CD14-positive monocyte (primary cell): ENCODE measurements at regions of chr21 and their contacts with region 1.

Region 1: DNA sequence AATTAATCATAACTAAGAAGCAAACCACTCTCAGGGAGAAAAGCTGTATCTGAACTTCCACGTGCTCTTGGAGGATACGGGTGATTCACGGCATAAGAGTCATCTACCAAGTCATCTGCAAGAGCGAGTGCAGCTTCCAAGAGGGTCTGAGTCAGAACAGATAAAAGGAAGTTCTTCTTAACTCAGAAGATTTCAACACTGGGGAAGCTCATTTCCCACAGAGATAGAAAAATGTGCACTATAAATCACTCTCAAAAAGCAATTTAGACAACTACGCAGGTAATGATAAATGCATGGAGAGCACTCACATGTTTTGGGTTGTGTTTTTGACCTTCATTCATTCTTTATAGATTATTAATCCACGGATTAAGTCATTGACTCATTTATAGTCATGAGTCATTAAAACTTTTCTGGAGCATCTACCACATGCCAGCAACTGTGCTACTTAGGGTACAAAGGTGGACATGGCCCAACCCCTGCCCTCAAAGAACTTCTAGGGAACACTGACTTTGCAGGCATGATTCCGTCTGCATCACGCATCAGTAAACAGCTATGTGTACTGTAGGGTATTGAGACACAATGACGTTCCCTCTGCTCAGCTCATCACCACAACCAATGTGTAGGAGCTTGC is 20.8 kb downstream of the KCNJ15 start:
- DNase-seq: peak; percentile 96 to 99 (median 98)
- H3K4me3 ChIP-seq: no peak overlapping the region
- H3K4me3 Mint-ChIP-seq: peak overlapping the region in 1 of 2 donors; percentile 30
- H3K27ac ChIP-seq: peak overlapping the region; percentile 88 to 99
- H3K27ac Mint-ChIP-seq: peak overlapping the region; percentile 95 to 99 (median 99)
- H3K4me1 ChIP-seq: peaks cover 88 to 94% of the 10 kb centered on the region in 2 donors
- H3K4me1 Mint-ChIP-seq: peaks cover 84% of the 10 kb centered on the region
- H3K27me3 ChIP-seq: no peaks in the 10 kb centered on the region
- H3K27me3 Mint-ChIP-seq: peaks cover 0 to 2% (median 0%) of the 10 kb centered on the region in 3 donors
- CTCF ChIP-seq: no peak

Region 2: DNA sequence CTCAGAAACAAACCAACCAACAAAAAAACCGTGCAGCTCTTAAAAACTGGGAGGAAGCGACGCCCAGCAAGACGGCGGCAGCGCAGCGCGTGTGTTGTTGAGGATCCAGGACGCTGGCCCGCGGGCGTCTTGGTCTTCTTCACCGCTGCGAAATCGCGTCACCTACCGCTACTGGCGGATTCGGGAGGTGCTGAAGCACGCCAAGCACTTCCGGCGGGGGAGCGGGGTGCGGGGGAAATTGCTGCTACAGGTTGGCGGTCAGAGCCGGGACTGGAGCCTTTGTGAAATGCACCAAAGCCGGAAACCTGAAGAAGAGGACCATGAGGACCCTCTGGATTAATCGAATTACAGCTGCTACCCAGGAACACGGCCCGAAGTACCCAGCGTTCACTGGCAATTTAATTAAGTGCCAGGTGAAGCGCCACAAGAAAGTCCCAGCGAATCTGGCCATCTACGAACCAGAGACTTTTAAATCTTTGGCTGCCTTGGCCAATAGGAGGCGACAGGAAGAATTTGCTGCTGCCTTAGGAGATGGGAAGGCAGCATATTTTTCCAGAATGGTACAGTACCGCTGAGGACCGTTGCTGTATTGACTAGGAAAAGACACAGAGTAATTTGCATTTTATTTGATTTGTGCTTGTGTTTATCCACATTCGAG is 1283.0 kb before region 1 on chr21:
- intact Hi-C with region 1: no loop called
- DNase-seq: no peak
- H3K4me3 ChIP-seq: no peak overlapping the region
- H3K4me3 Mint-ChIP-seq: peak overlapping the region; percentile 47 to 80
- H3K27ac ChIP-seq: no peak overlapping the region
- H3K27ac Mint-ChIP-seq: peak overlapping the region in 2 of 7 donors; percentile 23 to 46
- H3K4me1 ChIP-seq: peaks cover 0 to 9% of the 10 kb centered on the region in 2 donors
- H3K4me1 Mint-ChIP-seq: peaks cover 7% of the 10 kb centered on the region
- H3K27me3 ChIP-seq: peaks cover 4 to 25% of the 10 kb centered on the region in 2 donors
- H3K27me3 Mint-ChIP-seq: peaks cover 14 to 46% (median 29%) of the 10 kb centered on the region in 3 donors
- CTCF ChIP-seq: no peak

Region 3: DNA sequence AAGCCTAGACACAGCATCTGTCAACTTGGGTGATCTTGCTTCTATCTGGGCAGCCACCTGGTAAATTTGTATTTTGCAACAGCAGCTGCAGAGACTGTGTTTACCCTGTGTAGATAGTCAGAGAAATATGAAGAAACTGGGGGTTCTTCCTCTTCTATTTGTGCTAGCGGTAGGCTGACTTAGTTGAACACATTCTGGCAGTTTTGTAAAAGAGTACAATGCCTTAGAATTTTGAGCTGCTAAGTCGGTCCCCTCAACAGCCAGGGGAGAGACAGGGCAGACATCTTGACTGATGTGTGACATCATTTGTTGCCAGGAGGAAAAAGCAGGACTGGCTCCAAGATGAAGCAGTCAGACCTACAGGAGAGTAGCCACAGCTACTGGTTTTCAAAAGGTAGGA is 415.1 kb before region 1 on chr21:
- intact Hi-C with region 1: loop called in 1 of 2 experiments (anchors 10 kb)
- DNase-seq: peak; percentile 52 to 80 (median 69)
- H3K4me3 ChIP-seq: peak overlapping the region in 1 of 3 experiments; percentile 11
- H3K4me3 Mint-ChIP-seq: peak overlapping the region in 1 of 2 donors; percentile 80
- H3K27ac ChIP-seq: peak overlapping the region; percentile 6 to 55
- H3K27ac Mint-ChIP-seq: peak overlapping the region; percentile 84 to 98 (median 88)
- H3K4me1 ChIP-seq: peaks cover 47 to 50% of the 10 kb centered on the region in 2 donors
- H3K4me1 Mint-ChIP-seq: peaks cover 42% of the 10 kb centered on the region
- H3K27me3 ChIP-seq: no peaks in the 10 kb centered on the region
- H3K27me3 Mint-ChIP-seq: peaks cover 0 to 6% (median 0%) of the 10 kb centered on the region in 3 donors
- CTCF ChIP-seq: no peak

Region 4: DNA sequence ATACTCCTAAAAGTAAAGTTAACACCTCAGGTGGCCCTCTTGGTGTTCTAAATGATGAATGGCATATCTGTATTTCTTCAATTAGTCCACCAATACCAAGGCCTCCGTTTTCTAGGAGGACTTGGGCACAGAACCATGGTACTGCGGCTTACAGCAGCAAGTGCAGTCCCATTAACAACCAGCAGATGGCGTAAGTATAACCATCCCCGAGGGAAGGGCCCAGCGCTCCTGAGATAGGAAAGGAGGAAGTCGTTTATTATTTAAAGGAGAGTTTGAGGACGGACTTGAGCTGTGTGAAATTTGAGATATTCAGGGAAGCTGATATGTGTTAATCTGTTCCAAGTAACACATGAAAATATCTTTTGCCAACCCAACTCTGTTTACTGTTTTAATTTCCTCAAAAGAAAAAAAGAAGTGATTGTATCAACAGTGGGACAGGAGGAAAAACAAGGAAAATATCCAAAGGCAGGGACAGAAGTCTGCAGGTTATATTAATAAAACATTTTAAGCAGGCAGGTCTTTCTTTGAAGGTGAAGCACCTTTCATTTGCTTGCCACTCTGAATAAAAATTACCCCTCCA is 58.5 kb before region 1 on chr21:
- intact Hi-C with region 1: loop called (anchors 5 kb)
- DNase-seq: peak; percentile 83 to 88 (median 87)
- H3K4me3 ChIP-seq: no peak overlapping the region
- H3K4me3 Mint-ChIP-seq: peak overlapping the region in 1 of 2 donors; percentile 27
- H3K27ac ChIP-seq: peak overlapping the region in 1 of 2 donors; percentile 92
- H3K27ac Mint-ChIP-seq: peak overlapping the region; percentile 87 to 95 (median 90)
- H3K4me1 ChIP-seq: peaks cover 25 to 34% of the 10 kb centered on the region in 2 donors
- H3K4me1 Mint-ChIP-seq: peaks cover 27% of the 10 kb centered on the region
- H3K27me3 ChIP-seq: no peaks in the 10 kb centered on the region
- H3K27me3 Mint-ChIP-seq: peaks cover 0 to 4% (median 3%) of the 10 kb centered on the region in 3 donors
- CTCF ChIP-seq: peak; percentile 97

Region 5: GRCh38 chr21:38289705-38290485 is 12.3 kb after region 1 on chr21:
- intact Hi-C with region 1: loop called in 1 of 2 experiments (anchors 2 kb)
- DNase-seq: peak; percentile 98 to 100 (median 100)
- H3K4me3 ChIP-seq: peak overlapping the region in 1 of 3 experiments; percentile 8
- H3K4me3 Mint-ChIP-seq: peak overlapping the region; percentile 46 to 56
- H3K27ac ChIP-seq: peak overlapping the region; percentile 89 to 95
- H3K27ac Mint-ChIP-seq: peak overlapping the region; percentile 97 to 99 (median 98)
- H3K4me1 ChIP-seq: peaks cover 65 to 78% of the 10 kb centered on the region in 2 donors
- H3K4me1 Mint-ChIP-seq: peaks cover 87% of the 10 kb centered on the region
- H3K27me3 ChIP-seq: no peaks in the 10 kb centered on the region
- H3K27me3 Mint-ChIP-seq: no peaks in the 10 kb centered on the region
- CTCF ChIP-seq: no peak

Region 6: DNA sequence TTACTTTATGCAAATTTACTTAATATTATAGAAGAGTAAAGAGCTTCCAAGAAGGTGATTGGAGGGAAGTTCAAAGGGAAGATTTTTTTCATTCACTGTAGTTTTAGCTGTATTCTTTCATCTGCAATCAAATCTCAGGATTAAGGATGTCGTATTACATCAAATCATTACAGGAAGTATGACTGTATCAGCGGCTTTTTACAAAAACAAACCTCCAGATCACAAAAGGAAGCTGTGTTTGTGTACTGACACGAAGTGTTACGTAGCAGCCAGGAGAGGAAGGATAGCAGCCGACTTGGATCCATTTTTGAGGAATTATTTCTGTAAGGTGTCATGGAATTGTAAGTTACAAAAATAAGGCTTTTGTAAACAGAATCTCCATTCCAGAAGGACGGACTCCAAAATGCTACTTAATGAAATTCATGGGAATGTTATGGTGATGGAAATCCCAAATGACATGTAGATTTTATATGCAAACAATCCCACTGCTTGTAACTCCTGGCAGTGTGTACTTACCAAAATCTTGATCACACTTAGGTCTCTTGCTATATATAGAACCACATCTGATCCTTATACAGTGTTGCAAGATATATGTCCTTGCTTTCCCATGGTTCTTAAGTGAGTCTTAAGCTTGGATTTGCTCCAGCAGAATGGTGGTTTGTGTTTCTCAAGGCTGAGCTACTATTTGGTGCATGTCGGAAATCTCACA is 29.0 kb after region 1 on chr21:
- intact Hi-C with region 1: loop called (anchors 5 kb)
- DNase-seq: peak; percentile 72 to 91 (median 90)
- H3K4me3 ChIP-seq: no peak overlapping the region
- H3K4me3 Mint-ChIP-seq: peak overlapping the region in 1 of 2 donors; percentile 53
- H3K27ac ChIP-seq: peak overlapping the region in 1 of 2 donors; percentile 85
- H3K27ac Mint-ChIP-seq: peak overlapping the region; percentile 77 to 91 (median 86)
- H3K4me1 ChIP-seq: peaks cover 50 to 59% of the 10 kb centered on the region in 2 donors
- H3K4me1 Mint-ChIP-seq: peaks cover 56% of the 10 kb centered on the region
- H3K27me3 ChIP-seq: no peaks in the 10 kb centered on the region
- H3K27me3 Mint-ChIP-seq: peaks cover 0 to 2% (median 0%) of the 10 kb centered on the region in 3 donors
- CTCF ChIP-seq: no peak